ENCODE measurements at regions of chr10 and their contacts with region 1.

Region 1: DNA sequence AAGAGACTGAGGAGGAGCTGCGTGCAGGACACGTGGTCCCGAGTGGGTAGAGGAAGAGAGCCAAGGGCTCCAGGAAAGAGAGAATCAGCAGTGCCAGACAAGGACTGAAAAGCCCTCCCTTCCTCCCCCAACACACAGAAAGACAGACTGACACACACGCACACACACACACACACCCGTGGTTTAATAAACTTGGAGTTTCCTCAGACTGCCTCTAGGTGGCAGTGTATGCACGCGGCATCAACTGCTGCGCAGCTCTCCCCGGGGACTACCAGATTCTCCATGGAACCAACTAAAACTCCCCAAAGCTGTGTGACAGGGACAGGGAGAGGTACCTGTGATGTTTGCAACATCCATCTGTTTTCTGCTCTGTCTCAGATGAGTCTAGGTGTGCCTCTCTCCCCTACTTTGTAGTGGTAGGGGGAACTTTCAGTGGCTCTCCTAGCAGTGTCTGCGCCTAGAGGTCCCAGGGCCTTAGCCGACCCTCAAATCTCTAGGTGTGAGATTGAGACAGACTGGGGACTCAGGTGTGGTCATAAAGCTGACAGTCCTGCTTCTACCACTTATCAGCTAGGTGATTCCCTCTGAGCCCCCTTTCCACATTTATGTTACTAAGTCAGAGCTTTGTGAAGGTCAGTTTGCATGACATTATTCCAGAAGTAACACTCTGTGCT is 9.3 kb upstream of the TSPAN14 start:
- DNase-seq: peak; percentile 80
- H3K4me3 ChIP-seq: no peak overlapping the region
- H3K27ac ChIP-seq: no peak overlapping the region
- H3K4me1 ChIP-seq: no peaks in the 10 kb centered on the region
- H3K27me3 ChIP-seq: no peaks in the 10 kb centered on the region

Region 2: GRCh38 chr10:80500572-80501380 is 56.0 kb after region 1 on chr10:
- in situ Hi-C with region 1: loop called (anchors 5 kb)
- DNase-seq: no peak
- H3K4me3 ChIP-seq: no peak overlapping the region
- H3K27ac ChIP-seq: no peak overlapping the region
- H3K4me1 ChIP-seq: peaks cover 37% of the 10 kb centered on the region
- H3K27me3 ChIP-seq: no peaks in the 10 kb centered on the region

Region 3: GRCh38 chr10:80924063-80924952 is 479.5 kb after region 1 on chr10:
- in situ Hi-C with region 1: loop called (anchors 25 kb)
- DNase-seq: peak; percentile 52
- H3K4me3 ChIP-seq: no peak overlapping the region
- H3K27ac ChIP-seq: no peak overlapping the region
- H3K4me1 ChIP-seq: no peaks in the 10 kb centered on the region
- H3K27me3 ChIP-seq: no peaks in the 10 kb centered on the region

Measured in GM23248 (cell line).